Activated CD4-positive, alpha-beta memory T cell treated with anti-CD3 and anti-CD28 coated beads, Interleukin-2, amount 10 ng/mL, durations not matched to agents 7 days and 5 days (primary cell): ENCODE measurements at regions of chr7 and their contacts with region 1.

Region 1: GRCh38 chr7:44257618-44258422 is 57.0 kb downstream of the YKT6 start:
- DNase-seq: peak; percentile 81
- H3K4me3 Mint-ChIP-seq: peak overlapping the region; percentile 11
- H3K27ac Mint-ChIP-seq: peak overlapping the region; percentile 93
- H3K4me1 Mint-ChIP-seq: peaks cover 29% of the 10 kb centered on the region
- H3K27me3 Mint-ChIP-seq: no peaks in the 10 kb centered on the region

Region 2: GRCh38 chr7:44240983-44241510 is 16.8 kb before region 1 on chr7:
- CTCF ChIA-PET with region 1: interaction called, 13 read pairs
- POLR2A ChIA-PET with region 1: no interaction called
- DNase-seq: peak; percentile 70
- H3K4me3 Mint-ChIP-seq: no peak overlapping the region
- H3K27ac Mint-ChIP-seq: peak overlapping the region; percentile 31
- H3K4me1 Mint-ChIP-seq: no peaks in the 10 kb centered on the region
- H3K27me3 Mint-ChIP-seq: no peaks in the 10 kb centered on the region

Region 3: DNA sequence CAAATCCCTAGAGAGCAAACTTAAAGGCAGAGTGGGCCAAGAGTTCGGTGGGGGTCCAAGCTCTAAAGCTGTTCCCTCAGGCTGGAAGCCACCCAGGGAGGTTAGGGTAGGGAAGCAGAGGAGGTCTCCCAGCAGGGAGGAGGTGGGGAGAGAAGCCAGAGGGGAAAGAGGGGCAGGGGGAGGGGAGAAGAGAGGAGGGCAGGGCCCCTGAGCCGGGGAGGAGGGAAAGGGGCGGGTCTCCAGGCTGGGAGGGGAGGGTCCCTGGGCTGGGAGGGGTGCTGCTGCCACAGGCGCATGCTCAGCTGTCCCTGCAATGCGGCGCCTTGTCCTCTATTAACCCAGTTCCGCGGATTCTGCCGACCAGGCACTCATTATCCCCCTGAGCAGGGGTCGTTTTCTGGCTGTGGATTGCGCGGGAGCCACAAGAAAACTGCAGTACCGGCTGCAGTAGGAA is 18.2 kb after region 1 on chr7:
- CTCF ChIA-PET with region 1: no interaction called
- POLR2A ChIA-PET with region 1: no interaction called
- DNase-seq: no peak
- H3K4me3 Mint-ChIP-seq: no peak overlapping the region
- H3K27ac Mint-ChIP-seq: no peak overlapping the region
- H3K4me1 Mint-ChIP-seq: no peaks in the 10 kb centered on the region
- H3K27me3 Mint-ChIP-seq: peaks cover 2% of the 10 kb centered on the region

Region 4: DNA sequence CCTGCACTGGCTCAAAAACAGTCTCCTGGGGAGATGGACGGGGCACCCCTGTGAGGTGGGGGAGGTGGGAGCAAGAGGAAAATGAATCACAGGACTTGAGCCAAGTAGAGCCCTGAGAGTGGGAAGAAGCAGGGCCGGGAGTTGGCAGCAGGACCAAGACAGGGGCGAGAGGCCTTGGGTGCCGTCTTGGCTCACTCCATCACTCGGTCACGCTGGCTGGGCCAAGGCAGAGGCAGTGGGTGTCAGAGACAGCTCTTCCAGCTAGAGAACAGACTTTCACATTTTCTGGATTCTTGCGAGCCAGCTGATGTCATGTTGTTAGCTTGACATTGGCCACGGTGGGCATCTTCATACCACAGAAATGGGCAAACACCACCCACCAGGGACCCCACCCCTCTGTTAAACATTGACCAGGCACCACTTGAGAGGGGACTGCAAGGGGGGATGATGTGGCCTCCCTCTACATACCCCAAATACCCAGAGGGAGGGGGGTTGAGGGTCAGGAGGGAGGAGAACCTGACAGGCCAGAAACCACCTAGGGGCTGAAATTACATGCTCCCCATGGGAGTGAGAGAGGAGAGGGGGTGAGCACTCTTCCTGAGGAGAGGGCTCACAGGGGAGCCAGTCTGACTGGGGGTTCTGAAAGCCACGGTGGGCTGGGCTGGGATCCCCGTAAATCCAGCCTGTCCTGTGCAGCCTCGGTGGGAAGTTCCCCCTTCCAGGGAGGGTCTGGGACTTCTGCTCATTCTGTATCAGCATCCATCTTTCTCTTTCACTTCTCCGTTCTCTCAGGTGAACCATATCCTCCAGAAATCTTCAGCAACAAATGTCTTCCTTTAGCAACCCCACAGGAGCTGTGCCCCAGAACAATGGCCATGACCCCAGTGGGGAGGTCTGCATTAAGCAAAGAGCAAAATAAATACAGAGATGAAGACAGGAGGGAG is 48.0 kb after region 1 on chr7:
- CTCF ChIA-PET with region 1: no interaction called
- POLR2A ChIA-PET with region 1: no interaction called
- DNase-seq: peak; percentile 13
- H3K4me3 Mint-ChIP-seq: no peak overlapping the region
- H3K27ac Mint-ChIP-seq: no peak overlapping the region
- H3K4me1 Mint-ChIP-seq: peaks cover 8% of the 10 kb centered on the region
- H3K27me3 Mint-ChIP-seq: peaks cover 25% of the 10 kb centered on the region